ENCODE measurements at regions of chr11 and their contacts with region 1.

Region 1: GRCh38 chr11:57800444-57801182 is 39.0 kb downstream of the CTNND1 start:
- DNase-seq: no peak
- ATAC-seq: peak; percentile 86
- H3K4me3 ChIP-seq: no peak overlapping the region
- H3K27ac ChIP-seq: peak overlapping the region in 1 of 2 donors; percentile 8
- H3K4me1 ChIP-seq: no peaks in the 10 kb centered on the region
- H3K27me3 ChIP-seq: no peaks in the 10 kb centered on the region

Region 2: DNA sequence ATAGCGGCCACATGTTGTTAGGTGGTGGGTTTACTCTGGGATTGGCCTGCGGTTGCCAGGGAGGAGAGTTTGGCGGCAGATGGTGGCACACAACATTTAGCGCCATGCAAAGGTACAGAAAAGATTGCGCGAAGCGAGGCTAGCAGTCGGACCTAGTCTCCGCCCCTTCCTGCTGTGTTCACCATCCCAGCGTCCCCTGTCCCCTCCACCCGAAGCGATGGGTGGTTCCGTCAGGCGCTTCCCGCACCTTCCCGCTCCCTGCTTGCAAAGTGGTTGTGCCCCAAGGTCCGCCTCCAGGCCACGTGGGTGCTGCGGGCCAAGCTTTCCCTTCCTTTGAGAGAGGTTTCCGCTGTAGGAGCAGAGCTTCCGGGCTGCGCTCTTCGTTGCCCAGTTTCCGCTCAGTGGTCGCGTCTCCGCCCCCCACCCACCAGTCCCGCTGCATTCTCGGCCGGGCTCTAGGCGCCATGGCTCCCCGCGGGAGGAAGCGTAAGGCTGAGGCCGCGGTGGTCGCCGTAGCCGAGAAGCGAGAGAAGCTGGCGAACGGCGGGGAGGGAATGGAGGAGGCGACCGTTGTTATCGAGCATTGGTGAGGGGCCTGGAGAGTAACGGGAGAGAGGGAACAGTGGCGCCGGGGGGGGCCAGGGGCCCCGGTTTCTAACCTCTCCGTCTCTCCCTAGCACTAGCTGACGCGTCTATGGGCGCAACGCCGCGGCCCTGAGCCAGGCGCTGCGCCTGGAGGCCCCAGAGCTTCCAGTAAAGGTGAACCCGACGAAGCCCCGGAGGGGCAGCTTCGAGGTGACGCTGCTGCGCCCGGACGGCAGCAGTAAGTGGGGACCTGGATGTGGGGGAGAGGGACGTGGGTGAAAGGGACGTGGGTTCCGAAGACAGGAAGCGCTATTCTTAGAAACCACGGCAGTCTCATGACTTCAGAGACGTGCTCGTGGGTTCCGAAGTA is 59.2 kb before region 1 on chr11 and contains the start of gene SELENOH:
- intact Hi-C with region 1: loop called in 1 of 2 experiments (anchors 2 kb)
- DNase-seq: peak; percentile 98
- ATAC-seq: peak; percentile 98
- H3K4me3 ChIP-seq: peak within 1 kb of the TSS; percentile 67 to 69
- H3K27ac ChIP-seq: peak within 1 kb of the TSS; percentile 46 to 94
- H3K4me1 ChIP-seq: no peaks in the 10 kb centered on the region
- H3K27me3 ChIP-seq: no peaks in the 10 kb centered on the region
- total RNA-seq, gene SELENOH: 65.0 to 75.1 TPM

Region 3: GRCh38 chr11:57761301-57762234 is 39.0 kb before region 1 on chr11 and contains the start of gene CTNND1:
- intact Hi-C with region 1: loop called (anchors 5 kb)
- DNase-seq: peak; percentile 83 to 91
- ATAC-seq: peak; percentile 97
- H3K4me3 ChIP-seq: peak within 1 kb of the TSS; percentile 93 to 99
- H3K27ac ChIP-seq: peak within 1 kb of the TSS; percentile 82 to 95
- H3K4me1 ChIP-seq: peaks cover 2 to 13% of the 10 kb centered on the region in 2 donors
- H3K27me3 ChIP-seq: no peaks in the 10 kb centered on the region
- total RNA-seq, gene CTNND1: 167 to 213 TPM

Region 4: DNA sequence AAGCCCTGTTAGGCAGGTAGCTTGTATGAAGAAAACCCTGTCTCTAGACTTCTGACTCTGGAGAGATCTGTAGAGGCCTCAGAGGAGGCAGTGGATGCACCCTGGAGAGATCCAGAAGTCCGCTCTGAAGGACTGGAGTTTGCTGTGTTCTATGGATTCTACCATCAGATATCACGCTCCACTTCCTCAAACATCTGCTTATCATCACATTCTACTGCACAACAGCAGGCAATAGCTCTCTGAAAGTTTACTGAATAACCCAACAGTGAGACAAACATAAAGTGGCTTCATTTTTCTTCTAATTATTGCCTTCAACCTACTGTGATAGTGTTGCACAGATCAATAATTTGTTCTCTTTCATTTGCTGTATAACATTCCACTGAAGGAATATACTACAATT is 164.0 kb after region 1 on chr11:
- intact Hi-C with region 1: no loop called
- DNase-seq: no peak
- ATAC-seq: no peak
- H3K4me3 ChIP-seq: no peak overlapping the region
- H3K27ac ChIP-seq: no peak overlapping the region
- H3K4me1 ChIP-seq: no peaks in the 10 kb centered on the region
- H3K27me3 ChIP-seq: no peaks in the 10 kb centered on the region

Measured in aorta (tissue), 5 donors.